Panc1 (cell line): ENCODE measurements at regions of chr17 and their contacts with region 1.

Region 1: GRCh38 chr17:82351716-82352488 is 7.1 kb upstream of the TEX19 start:
- DNase-seq: peak; percentile 58
- ATAC-seq: peak; percentile 88
- H3K4me3 ChIP-seq: no peak overlapping the region
- H3K27ac ChIP-seq: no peak overlapping the region
- H3K4me1 ChIP-seq: peaks cover 29% of the 10 kb centered on the region
- H3K27me3 ChIP-seq: no peaks in the 10 kb centered on the region
- CTCF ChIP-seq: peak; percentile 98

Region 2: DNA sequence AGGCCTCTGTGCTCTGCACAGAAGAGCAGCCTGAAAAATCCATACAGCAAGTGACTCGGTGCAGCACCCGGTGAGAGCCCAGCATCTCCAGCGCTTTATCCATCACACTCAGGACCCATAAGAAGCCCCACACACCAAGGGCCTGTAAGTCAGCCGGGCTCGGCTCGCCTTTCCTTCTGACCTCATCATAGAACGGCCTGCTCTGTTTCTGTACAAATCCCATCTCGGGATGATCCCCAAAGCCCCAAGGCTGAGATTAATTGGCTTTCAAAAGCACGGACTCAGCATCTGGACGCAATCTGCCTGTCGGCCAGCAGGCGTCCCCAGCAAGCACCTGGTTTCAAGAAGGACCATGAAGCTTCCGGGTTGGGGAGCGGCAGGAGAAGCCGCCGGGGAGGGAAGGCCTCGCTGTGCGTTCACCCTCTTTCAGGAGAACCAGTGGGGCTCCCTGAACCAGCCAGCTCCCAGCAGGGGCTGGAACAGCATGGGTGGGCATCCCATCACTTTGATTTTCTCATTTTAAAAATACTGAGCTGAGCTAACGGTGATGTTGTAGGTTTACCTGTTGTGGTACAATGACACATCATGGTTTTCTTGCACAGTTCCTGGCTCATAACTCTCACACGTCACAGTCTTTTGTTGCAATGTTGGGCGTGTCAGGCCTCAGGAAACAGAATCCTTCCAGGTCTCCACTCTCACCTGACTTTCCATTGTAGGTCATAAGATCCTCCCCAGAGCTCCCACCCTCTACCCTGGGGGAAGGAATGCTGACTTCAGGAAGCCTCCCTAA is 146.0 kb before region 1 on chr17:
- CTCF ChIA-PET with region 1: no interaction called
- POLR2A ChIA-PET with region 1: no interaction called
- in situ Hi-C with region 1: no loop called
- intact Hi-C with region 1: no loop called
- DNase-seq: peak; percentile 75
- ATAC-seq: peak; percentile 81
- H3K4me3 ChIP-seq: peak overlapping the region in 1 of 2 experiments; percentile 16; a peak in 1 of 4 replicates
- H3K27ac ChIP-seq: peak overlapping the region; percentile 95
- H3K4me1 ChIP-seq: peaks cover 41% of the 10 kb centered on the region
- H3K27me3 ChIP-seq: no peaks in the 10 kb centered on the region
- CTCF ChIP-seq: peak; percentile 97

Region 3: DNA sequence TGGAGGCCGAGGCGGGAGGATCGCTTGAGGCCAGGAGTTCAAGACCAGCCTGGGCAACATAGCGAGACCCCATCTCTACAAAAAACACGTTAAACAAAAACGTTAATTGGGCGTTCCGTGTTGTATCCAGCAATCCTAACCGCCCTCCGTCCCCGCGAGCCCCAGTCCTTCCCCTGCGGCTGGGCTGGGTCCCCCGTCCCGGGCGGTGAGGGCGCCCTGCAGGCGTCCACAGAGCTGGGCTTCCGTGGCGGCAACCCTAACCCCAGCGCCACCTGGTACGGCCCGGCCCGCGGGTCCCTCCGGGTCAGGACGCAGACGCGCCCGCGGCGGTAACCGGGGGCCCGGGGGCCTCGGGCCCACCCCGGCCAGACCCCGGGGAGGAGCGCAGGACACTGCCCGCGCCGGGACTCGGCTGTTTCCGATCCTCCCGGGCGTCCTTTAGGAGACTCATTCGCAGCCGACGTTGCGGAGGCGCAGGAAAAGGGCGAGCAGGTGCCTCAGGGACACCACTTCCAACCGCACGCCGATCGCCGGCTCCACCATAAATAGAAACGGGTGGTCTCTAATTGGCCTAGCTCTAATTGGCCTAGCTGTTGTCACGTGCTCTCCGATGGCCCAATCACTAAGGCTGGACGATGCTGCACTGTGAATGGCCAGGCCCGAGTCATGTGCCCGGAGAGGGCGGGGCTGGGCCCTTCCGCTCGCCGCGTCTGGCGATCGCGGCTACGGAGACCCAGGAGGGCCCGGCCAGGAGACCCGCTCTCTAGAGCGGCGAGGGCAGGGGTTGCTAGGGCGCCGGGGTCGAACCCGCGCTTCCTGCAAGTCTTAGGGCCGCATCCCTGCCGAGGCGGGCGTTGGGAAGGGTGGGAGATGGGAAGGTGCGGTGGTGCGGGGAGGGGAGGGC is 59.4 kb before region 1 on chr17:
- CTCF ChIA-PET with region 1: no interaction called
- POLR2A ChIA-PET with region 1: no interaction called
- in situ Hi-C with region 1: loop called (anchors 10 kb)
- intact Hi-C with region 1: no loop called
- DNase-seq: peak; percentile 85
- ATAC-seq: peak; percentile 94
- H3K4me3 ChIP-seq: peak overlapping the region; percentile 60 to 66
- H3K27ac ChIP-seq: peak overlapping the region; percentile 89
- H3K4me1 ChIP-seq: peaks cover 63% of the 10 kb centered on the region
- H3K27me3 ChIP-seq: no peaks in the 10 kb centered on the region
- CTCF ChIP-seq: no peak

Region 4: GRCh38 chr17:82400830-82401229 is 48.9 kb after region 1 on chr17:
- CTCF ChIA-PET with region 1: no interaction called
- POLR2A ChIA-PET with region 1: no interaction called
- in situ Hi-C with region 1: no loop called
- intact Hi-C with region 1: no loop called
- DNase-seq: no peak
- ATAC-seq: no peak
- H3K4me3 ChIP-seq: no peak overlapping the region
- H3K27ac ChIP-seq: no peak overlapping the region
- H3K4me1 ChIP-seq: peaks cover 7% of the 10 kb centered on the region; the same call in 1 of the 2 replicates
- H3K27me3 ChIP-seq: no peaks in the 10 kb centered on the region
- CTCF ChIP-seq: no peak

Region 5: GRCh38 chr17:82412535-82413520 is 60.9 kb after region 1 on chr17:
- CTCF ChIA-PET with region 1: interaction called, 4 read pairs
- POLR2A ChIA-PET with region 1: no interaction called
- in situ Hi-C with region 1: loop called (anchors 5 kb)
- intact Hi-C with region 1: loop called (anchors 1 kb)
- DNase-seq: no peak
- ATAC-seq: peak; percentile 3; the same call in 1 of the 2 replicates
- H3K4me3 ChIP-seq: no peak overlapping the region
- H3K27ac ChIP-seq: no peak overlapping the region
- H3K4me1 ChIP-seq: peaks cover 9% of the 10 kb centered on the region
- H3K27me3 ChIP-seq: no peaks in the 10 kb centered on the region
- CTCF ChIP-seq: no peak

Region 6: GRCh38 chr17:82418001-82418986 is 66.4 kb after region 1 on chr17 and contains the starts of genes HEXD and OGFOD3:
- CTCF ChIA-PET with region 1: no interaction called
- POLR2A ChIA-PET with region 1: no interaction called
- in situ Hi-C with region 1: loop called (anchors 5 kb)
- intact Hi-C with region 1: loop called (anchors 1 kb)
- DNase-seq: no peak
- ATAC-seq: peak; percentile 94
- H3K4me3 ChIP-seq: peak within 1 kb of the TSS; percentile 86 to 98
- H3K27ac ChIP-seq: peak within 1 kb of the TSS; percentile 86
- H3K4me1 ChIP-seq: peaks cover 15% of the 10 kb centered on the region
- H3K27me3 ChIP-seq: no peaks in the 10 kb centered on the region
- CTCF ChIP-seq: no peak
- total RNA-seq, gene HEXD: 25.6 TPM
- total RNA-seq, gene OGFOD3: 53.9 TPM